ENCODE measurements at regions of chr19 and their contacts with region 1.

Region 1: GRCh38 chr19:57435062-57435978 is at the start of gene ZNF749:
- DNase-seq: peak; percentile 97
- ATAC-seq: peak; percentile 98
- H3K4me3 Mint-ChIP-seq: peak within 1 kb of the TSS; percentile 92
- H3K27ac Mint-ChIP-seq: peak within 1 kb of the TSS; percentile 89
- H3K4me1 Mint-ChIP-seq: peaks cover 21% of the 10 kb centered on the region
- H3K27me3 Mint-ChIP-seq: no peaks in the 10 kb centered on the region
- total RNA-seq, gene ZNF749: 10.6 to 17.9 TPM

Region 2: GRCh38 chr19:57279418-57280066 is 155.8 kb before region 1 on chr19:
- CTCF ChIA-PET with region 1: no interaction called
- POLR2A ChIA-PET with region 1: no interaction called
- intact Hi-C with region 1: loop called in 1 of 2 experiments (anchors 1 kb)
- DNase-seq: peak; percentile 92
- ATAC-seq: peak; percentile 74
- H3K4me3 Mint-ChIP-seq: no peak overlapping the region
- H3K27ac Mint-ChIP-seq: no peak overlapping the region
- H3K4me1 Mint-ChIP-seq: peaks cover 31% of the 10 kb centered on the region
- H3K27me3 Mint-ChIP-seq: no peaks in the 10 kb centered on the region

Region 3: DNA sequence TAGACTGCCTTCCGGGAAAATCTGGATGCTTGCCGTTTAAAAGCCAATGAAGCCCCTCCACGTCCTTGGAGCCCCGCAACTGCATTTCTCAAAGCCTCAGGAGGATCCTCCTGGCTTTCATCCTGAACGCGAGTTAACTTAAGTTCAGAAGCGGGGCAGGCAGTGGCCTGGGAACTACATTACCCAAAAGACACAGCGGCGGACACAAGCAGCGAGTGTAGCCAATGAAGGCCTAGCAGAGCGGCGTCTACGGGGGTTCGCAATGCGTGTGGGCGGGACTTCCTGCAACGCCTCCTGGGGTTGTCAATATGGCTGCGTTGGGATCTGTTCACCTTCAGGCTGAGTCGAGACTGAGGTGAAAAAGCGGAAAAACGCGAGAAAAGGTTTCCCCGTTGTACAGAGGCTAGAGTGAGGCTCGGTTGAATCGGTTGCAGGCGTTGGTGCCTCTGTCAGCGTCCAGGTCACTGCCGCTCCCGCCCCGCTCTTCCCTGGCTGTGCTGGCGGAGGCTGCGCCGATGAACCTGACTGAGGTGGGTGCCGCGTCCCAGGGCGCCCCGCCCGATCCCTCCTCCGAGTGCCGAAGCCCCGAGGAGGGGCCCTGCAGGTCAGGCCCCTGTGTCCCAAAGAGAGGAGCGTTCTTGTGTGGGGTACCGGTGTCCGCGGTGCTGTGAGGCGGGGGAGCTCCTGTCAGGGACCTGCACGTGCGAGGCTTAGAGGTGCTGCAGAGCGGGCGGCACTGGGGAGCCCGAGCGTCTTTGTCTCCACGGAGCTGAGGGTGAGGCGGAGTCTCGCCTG is 24.2 kb before region 1 on chr19 and contains the start of gene ZNF17:
- CTCF ChIA-PET with region 1: interaction called, 3 read pairs
- POLR2A ChIA-PET with region 1: no interaction called
- intact Hi-C with region 1: loop called (anchors 1 kb)
- DNase-seq: peak; percentile 96
- ATAC-seq: peak; percentile 100
- H3K4me3 Mint-ChIP-seq: peak within 1 kb of the TSS; percentile 93
- H3K27ac Mint-ChIP-seq: peak within 1 kb of the TSS; percentile 84
- H3K4me1 Mint-ChIP-seq: peaks cover 14% of the 10 kb centered on the region
- H3K27me3 Mint-ChIP-seq: no peaks in the 10 kb centered on the region
- total RNA-seq, gene ZNF17: 6.4 to 8.3 TPM

Region 4: DNA sequence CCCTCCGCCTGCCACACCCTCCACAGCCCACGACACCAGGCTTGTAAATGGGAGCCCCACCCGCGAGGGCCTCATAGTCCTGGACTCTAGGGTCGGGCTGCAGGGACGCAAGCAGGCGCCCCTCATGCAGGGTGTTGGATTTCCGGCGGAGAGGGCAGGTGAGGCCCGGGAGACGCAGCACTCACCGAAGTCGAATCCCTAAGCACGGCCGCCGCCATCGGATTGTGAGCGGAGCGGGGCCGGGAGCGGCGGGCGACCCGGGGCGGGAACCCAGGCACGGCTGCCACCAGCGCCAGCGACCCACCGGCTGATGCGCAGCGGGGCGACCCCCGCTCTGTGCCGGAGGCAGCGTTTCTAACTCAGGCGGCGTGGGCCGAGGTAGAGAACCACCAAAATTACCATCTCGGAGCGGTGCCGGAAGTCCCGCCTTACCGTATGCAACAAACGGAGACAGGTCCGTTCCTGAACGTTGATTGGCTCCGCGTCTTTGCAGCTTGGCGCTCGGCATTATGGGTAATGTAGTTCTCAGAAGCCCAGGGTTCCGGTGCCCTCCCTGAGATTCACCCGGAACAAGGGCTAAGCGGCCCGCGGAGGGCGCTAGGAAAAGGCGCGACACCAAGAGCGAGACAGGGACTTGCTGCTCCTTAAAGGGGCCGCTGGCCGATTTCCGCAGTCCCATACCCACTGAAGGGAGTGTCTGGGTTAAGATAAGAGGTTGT is 143.3 kb after region 1 on chr19 and contains the start of gene ZNF416:
- CTCF ChIA-PET with region 1: no interaction called
- POLR2A ChIA-PET with region 1: no interaction called
- intact Hi-C with region 1: loop called in 1 of 2 experiments (anchors 1 kb)
- DNase-seq: peak; percentile 97
- ATAC-seq: peak; percentile 96
- H3K4me3 Mint-ChIP-seq: peak within 1 kb of the TSS; percentile 77
- H3K27ac Mint-ChIP-seq: peak within 1 kb of the TSS; percentile 77
- H3K4me1 Mint-ChIP-seq: peaks cover 23% of the 10 kb centered on the region
- H3K27me3 Mint-ChIP-seq: no peaks in the 10 kb centered on the region
- total RNA-seq, gene ZNF416: 3.3 to 3.7 TPM

Region 5: GRCh38 chr19:57769345-57770131 is 334.2 kb after region 1 on chr19 and contains the start of gene ZNF586:
- CTCF ChIA-PET with region 1: no interaction called
- POLR2A ChIA-PET with region 1: no interaction called
- intact Hi-C with region 1: loop called in 1 of 2 experiments (anchors 1 kb)
- DNase-seq: peak; percentile 93
- ATAC-seq: peak; percentile 99
- H3K4me3 Mint-ChIP-seq: peak within 1 kb of the TSS; percentile 90
- H3K27ac Mint-ChIP-seq: peak within 1 kb of the TSS; percentile 93
- H3K4me1 Mint-ChIP-seq: peaks cover 25% of the 10 kb centered on the region
- H3K27me3 Mint-ChIP-seq: no peaks in the 10 kb centered on the region
- total RNA-seq, gene ZNF586: 20.3 to 20.5 TPM

Region 6: GRCh38 chr19:57935731-57936130 is 500.4 kb after region 1 on chr19:
- CTCF ChIA-PET with region 1: no interaction called
- POLR2A ChIA-PET with region 1: no interaction called
- intact Hi-C with region 1: no loop called
- DNase-seq: no peak
- ATAC-seq: no peak
- H3K4me3 Mint-ChIP-seq: peak overlapping the region; percentile 83
- H3K27ac Mint-ChIP-seq: no peak overlapping the region
- H3K4me1 Mint-ChIP-seq: peaks cover 9% of the 10 kb centered on the region
- H3K27me3 Mint-ChIP-seq: no peaks in the 10 kb centered on the region

Region 7: DNA sequence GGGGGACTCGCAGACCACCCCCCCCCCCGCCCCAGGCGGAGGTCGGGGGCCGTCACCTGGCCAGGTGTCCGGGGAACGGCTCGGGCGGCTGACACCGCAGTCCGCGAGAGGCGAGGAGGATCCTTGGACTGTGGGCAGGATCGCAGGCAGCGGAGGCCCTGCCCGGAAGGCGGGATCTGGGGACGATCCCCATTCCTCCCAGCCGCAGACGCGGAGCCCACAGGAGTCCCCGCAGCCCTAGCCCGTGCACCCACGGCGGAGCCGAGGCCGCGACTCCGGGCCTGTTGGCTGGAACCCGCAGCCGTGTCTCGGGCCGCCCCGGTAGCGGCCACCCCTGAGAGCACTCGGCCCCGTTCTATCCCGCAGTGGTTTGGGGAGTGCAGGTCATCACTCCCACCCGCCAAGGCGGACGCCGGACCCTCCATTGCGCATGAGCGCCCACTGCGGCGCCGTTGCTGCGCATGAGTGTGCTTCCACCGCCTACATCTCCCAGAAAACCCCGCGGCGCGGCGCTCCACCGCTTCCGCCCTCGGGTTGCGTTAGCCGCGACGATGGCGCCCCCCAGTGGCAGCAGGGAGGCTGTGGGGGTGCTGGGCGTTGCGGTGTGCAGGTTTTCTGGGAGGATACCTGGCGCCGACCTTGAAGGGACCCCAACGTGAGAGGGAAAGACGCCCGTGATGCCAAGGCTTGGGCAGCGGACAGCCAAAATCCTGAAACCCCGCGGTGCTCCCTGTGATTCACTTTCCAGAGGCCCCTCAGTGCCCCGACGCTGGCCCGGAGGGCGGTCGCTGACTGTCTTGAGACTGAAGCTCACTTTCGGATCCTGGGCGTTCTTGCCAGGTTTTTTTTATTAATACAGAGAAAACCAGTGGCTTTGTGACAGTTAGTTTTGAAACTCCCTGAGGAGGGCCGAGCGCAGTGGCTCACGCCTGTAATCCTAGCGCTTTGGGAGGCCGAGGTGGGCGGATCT is 719.6 kb after region 1 on chr19:
- CTCF ChIA-PET with region 1: no interaction called
- POLR2A ChIA-PET with region 1: no interaction called
- intact Hi-C with region 1: loop called in 1 of 2 experiments (anchors 1 kb)
- DNase-seq: peak; percentile 99
- ATAC-seq: peak; percentile 87
- H3K4me3 Mint-ChIP-seq: peak overlapping the region; percentile 71
- H3K27ac Mint-ChIP-seq: peak overlapping the region; percentile 51
- H3K4me1 Mint-ChIP-seq: peaks cover 10% of the 10 kb centered on the region
- H3K27me3 Mint-ChIP-seq: no peaks in the 10 kb centered on the region

Measured in activated CD4-positive, alpha-beta T cell treated with anti-CD3 and anti-CD28 coated beads for 36 hours (primary cell).